ENCODE measurements at regions of chr18 and their contacts with region 1.

Region 1: DNA sequence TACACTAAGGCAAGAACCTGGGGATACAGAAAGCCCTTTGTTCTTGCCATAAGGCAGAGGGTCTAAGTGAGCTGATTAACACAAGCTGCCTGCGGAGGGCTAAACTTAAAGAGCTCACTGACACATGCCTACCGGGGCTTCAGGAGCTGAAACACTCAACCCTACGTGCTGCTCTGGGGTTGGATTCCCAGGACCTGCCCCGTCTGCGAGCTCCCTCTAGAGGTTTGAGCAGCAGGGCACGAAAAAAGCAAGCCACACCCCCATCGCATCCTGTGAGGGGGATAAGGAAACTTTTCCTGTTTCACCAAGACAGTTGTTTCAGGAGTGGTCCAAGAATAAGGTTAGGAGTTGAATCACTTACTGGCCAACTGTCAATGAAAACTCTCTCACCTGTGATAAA is 562.1 kb downstream of the TMX3 start:
- DNase-seq: no peak
- H3K4me3 ChIP-seq: no peak overlapping the region
- H3K27ac ChIP-seq: no peak overlapping the region
- H3K4me1 ChIP-seq: no peaks in the 10 kb centered on the region
- H3K27me3 ChIP-seq: no peaks in the 10 kb centered on the region
- CTCF ChIP-seq: no peak
- POLR2A ChIP-seq: no peak

Region 2: DNA sequence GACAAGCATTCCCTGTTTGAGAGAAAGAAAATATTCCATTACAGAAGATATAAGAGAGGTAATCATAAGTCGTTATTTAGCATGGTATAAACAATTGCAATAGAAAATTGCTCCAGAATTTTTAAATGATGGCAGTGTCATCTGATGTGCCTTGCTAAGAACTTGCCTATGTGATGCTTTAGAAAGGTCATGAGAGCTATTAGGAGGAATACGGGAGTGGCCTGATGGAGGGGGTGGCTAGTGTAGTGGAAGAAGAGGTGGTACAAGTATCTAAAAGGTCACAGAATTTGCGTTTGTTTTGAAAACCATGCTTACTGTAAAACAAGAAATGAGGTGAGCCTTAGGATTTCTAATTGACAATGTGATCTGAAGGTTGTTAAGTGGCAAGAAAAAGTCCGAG is 12.1 kb after region 1 on chr18:
- intact Hi-C with region 1: loop called (anchors 1 kb)
- DNase-seq: no peak
- H3K4me3 ChIP-seq: no peak overlapping the region
- H3K27ac ChIP-seq: no peak overlapping the region
- H3K4me1 ChIP-seq: no peaks in the 10 kb centered on the region
- H3K27me3 ChIP-seq: no peaks in the 10 kb centered on the region
- CTCF ChIP-seq: no peak
- POLR2A ChIP-seq: no peak

Region 3: GRCh38 chr18:68722821-68723220 is 570.1 kb after region 1 on chr18:
- intact Hi-C with region 1: no loop called
- DNase-seq: no peak
- H3K4me3 ChIP-seq: no peak overlapping the region
- H3K27ac ChIP-seq: no peak overlapping the region
- H3K4me1 ChIP-seq: no peaks in the 10 kb centered on the region
- H3K27me3 ChIP-seq: no peaks in the 10 kb centered on the region
- CTCF ChIP-seq: no peak
- POLR2A ChIP-seq: no peak

Measured in breast epithelium (tissue), 4 donors.